ENCODE measurements at regions of chr11 and their contacts with region 1.

Region 1: GRCh38 chr11:83583757-83584352 is 297.7 kb upstream of the CCDC90B start:
- DNase-seq: no peak
- ATAC-seq: peak; percentile 94
- H3K4me3 Mint-ChIP-seq: no peak overlapping the region
- H3K27ac Mint-ChIP-seq: no peak overlapping the region
- H3K4me1 Mint-ChIP-seq: peaks cover 4% of the 10 kb centered on the region
- H3K27me3 Mint-ChIP-seq: peaks cover 8% of the 10 kb centered on the region

Region 2: GRCh38 chr11:83033972-83034672 is 549.7 kb before region 1 on chr11:
- CTCF ChIA-PET with region 1: no interaction called
- POLR2A ChIA-PET with region 1: no interaction called
- intact Hi-C with region 1: no loop called
- DNase-seq: no peak
- ATAC-seq: peak; percentile 58
- H3K4me3 Mint-ChIP-seq: no peak overlapping the region
- H3K27ac Mint-ChIP-seq: no peak overlapping the region
- H3K4me1 Mint-ChIP-seq: peaks cover 32% of the 10 kb centered on the region
- H3K27me3 Mint-ChIP-seq: no peaks in the 10 kb centered on the region

Region 3: GRCh38 chr11:83480251-83480650 is 103.6 kb before region 1 on chr11:
- CTCF ChIA-PET with region 1: no interaction called
- POLR2A ChIA-PET with region 1: no interaction called
- intact Hi-C with region 1: no loop called
- DNase-seq: no peak
- ATAC-seq: no peak
- H3K4me3 Mint-ChIP-seq: no peak overlapping the region
- H3K27ac Mint-ChIP-seq: no peak overlapping the region
- H3K4me1 Mint-ChIP-seq: no peaks in the 10 kb centered on the region
- H3K27me3 Mint-ChIP-seq: peaks cover 12% of the 10 kb centered on the region

Region 4: GRCh38 chr11:83543706-83544439 is 40.0 kb before region 1 on chr11:
- CTCF ChIA-PET with region 1: no interaction called
- POLR2A ChIA-PET with region 1: no interaction called
- intact Hi-C with region 1: loop called in 1 of 2 experiments (anchors 1 kb)
- DNase-seq: peak; percentile 6
- ATAC-seq: peak; percentile 99
- H3K4me3 Mint-ChIP-seq: no peak overlapping the region
- H3K27ac Mint-ChIP-seq: no peak overlapping the region
- H3K4me1 Mint-ChIP-seq: peaks cover 4% of the 10 kb centered on the region
- H3K27me3 Mint-ChIP-seq: peaks cover 3% of the 10 kb centered on the region

Region 5: GRCh38 chr11:83628622-83629355 is 44.9 kb after region 1 on chr11:
- CTCF ChIA-PET with region 1: no interaction called
- POLR2A ChIA-PET with region 1: no interaction called
- intact Hi-C with region 1: no loop called
- DNase-seq: no peak
- ATAC-seq: no peak
- H3K4me3 Mint-ChIP-seq: no peak overlapping the region
- H3K27ac Mint-ChIP-seq: no peak overlapping the region
- H3K4me1 Mint-ChIP-seq: no peaks in the 10 kb centered on the region
- H3K27me3 Mint-ChIP-seq: peaks cover 7% of the 10 kb centered on the region

Measured in activated CD4-positive, alpha-beta T cell treated with anti-CD3 and anti-CD28 coated beads for 36 hours (primary cell).